Psoas muscle (tissue), 8 donors: ENCODE measurements at regions of chr12 and their contacts with region 1.

Region 1: GRCh38 chr12:26028953-26029735 is 70.7 kb downstream of the RASSF8 start:
- DNase-seq: no peak
- ATAC-seq: peak; percentile 65 to 88 (median 69)
- H3K4me3 ChIP-seq: no peak overlapping the region
- H3K27ac ChIP-seq: no peak overlapping the region
- H3K4me1 ChIP-seq: peaks cover 22% of the 10 kb centered on the region
- H3K27me3 ChIP-seq: no peaks in the 10 kb centered on the region
- CTCF ChIP-seq: peak; percentile 84

Region 2: DNA sequence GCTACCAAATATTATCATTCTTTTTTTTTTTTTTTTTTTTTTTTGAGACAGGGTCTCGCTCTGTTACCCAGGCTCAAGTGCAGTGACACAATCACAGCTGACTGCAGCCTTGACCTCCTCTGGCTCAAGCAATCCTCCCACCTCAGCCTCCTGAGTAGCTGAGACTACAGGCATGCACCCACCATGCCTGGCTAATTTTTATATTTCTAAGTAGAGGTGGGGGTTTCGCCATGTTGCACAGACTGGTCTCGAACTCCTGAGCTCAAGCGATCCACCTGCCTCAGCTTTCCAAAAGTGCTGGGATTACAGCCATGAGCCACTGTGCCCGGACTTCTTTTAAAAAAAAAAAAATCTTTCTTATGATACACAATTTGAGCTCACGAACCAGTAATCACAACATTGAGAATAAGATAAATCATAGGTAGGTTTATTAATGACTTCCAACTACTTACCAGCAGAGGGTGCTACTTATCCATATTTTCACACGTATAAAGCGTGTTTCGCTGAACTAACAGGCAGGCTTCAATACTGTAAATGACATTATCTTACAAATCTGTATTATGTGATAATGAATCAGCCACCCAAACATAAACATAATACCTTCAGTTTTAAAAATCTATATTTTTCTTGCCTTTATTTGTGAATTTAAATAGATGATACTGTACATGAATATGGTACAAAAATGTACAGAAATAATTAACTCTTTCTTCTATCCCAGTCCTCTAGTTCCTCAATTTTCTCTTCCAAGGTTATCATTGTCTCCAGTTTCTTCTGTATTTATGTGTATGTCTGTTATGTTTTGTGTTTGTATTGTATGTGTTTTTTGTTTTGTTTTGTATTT is 1037.7 kb before region 1 on chr12:
- intact Hi-C with region 1: loop called in 1 of 2 experiments (anchors 5 kb)
- DNase-seq: no peak
- ATAC-seq: peak; percentile 69 to 86 (median 74)
- H3K4me3 ChIP-seq: no peak overlapping the region
- H3K27ac ChIP-seq: no peak overlapping the region
- H3K4me1 ChIP-seq: no peaks in the 10 kb centered on the region
- H3K27me3 ChIP-seq: no peaks in the 10 kb centered on the region
- CTCF ChIP-seq: peak; percentile 72

Region 3: DNA sequence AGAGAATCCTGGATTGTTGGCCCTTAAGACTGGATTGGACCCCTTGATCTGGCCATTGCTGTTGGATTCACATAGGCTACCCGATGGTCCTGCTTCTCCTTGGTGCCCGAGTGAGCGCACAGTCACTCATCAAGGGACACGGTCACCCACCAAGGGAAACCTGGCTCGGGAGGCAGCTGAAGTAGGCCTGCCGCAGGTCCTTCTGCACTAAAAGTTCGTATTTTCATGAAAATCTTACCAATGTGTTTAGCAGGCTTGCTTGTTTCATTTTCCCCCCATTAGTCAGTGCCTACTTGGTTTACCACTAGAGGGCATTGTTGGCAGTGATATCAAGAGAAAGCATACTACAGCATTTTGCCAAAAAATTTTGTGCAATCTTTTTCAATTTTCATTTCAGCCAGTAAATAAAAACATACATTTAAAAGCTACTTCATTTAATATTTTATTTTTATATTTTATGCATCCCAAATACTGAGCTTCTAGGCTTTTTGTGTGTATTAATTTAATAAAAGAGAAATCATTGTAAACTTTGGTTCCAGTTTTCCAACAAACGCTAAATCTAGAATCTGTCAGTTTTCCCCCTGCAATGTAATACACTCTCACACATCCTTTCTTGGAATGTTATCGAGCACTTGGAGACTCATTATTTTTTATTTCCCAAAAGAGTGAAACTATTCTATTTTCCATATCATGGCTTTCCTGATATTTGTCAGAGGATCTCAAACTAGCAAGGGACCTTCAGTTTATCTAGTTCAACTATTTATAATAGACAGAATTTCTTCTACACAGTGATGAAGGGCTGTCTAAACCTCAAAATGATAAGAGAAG is 592.7 kb before region 1 on chr12:
- intact Hi-C with region 1: loop called (anchors 2 kb)
- DNase-seq: peak in 1 of 2 donors; percentile 45
- ATAC-seq: peak in 3 of 4 donors; percentile 49 to 90 (median 74)
- H3K4me3 ChIP-seq: peak overlapping the region; percentile 62
- H3K27ac ChIP-seq: no peak overlapping the region
- H3K4me1 ChIP-seq: no peaks in the 10 kb centered on the region
- H3K27me3 ChIP-seq: no peaks in the 10 kb centered on the region
- CTCF ChIP-seq: peak; percentile 79

Region 4: DNA sequence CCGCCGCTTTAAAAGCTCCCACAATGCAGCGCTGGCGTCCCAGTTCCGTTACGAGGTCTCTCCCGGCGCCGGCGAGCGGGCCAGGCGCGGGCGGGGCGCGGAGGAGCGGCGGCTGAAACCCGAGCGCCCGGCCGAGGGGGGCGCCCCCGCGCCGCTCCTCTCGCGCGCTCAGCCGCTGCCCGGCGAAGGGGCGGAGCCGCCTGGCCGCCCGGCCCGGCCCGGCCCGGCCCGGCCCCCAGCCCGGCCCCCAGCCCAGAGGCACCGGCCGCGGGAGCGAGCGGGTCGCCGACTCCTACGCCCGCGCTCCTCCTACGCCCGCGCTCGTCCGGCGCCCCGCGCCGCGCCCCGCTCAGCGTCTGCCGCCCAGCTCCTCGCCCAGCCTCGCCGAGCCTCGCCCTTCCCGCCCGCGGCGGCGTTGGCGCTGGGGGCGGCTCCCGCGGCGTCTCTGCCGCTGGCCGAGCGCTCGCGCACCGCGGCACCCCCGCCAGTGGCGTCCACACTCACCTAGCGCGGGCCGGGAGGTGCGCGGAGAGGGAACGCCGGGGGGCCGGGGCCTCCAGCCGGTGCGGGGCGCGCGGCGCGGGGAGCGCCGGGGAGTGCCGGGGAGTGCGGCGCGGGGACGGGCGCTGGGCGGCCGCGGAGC is 70.6 kb before region 1 on chr12 and contains the start of gene RASSF8:
- intact Hi-C with region 1: loop called in 1 of 2 experiments (anchors 5 kb)
- DNase-seq: peak; percentile 84 to 86
- ATAC-seq: peak; percentile 87 to 92 (median 90)
- H3K4me3 ChIP-seq: peak within 1 kb of the TSS; percentile 74
- H3K27ac ChIP-seq: peak within 1 kb of the TSS; percentile 90
- H3K4me1 ChIP-seq: peaks cover 32% of the 10 kb centered on the region
- H3K27me3 ChIP-seq: no peaks in the 10 kb centered on the region
- CTCF ChIP-seq: no peak
- total RNA-seq, gene RASSF8: 41.9 to 80.3 (median 54.2) TPM

Region 5: DNA sequence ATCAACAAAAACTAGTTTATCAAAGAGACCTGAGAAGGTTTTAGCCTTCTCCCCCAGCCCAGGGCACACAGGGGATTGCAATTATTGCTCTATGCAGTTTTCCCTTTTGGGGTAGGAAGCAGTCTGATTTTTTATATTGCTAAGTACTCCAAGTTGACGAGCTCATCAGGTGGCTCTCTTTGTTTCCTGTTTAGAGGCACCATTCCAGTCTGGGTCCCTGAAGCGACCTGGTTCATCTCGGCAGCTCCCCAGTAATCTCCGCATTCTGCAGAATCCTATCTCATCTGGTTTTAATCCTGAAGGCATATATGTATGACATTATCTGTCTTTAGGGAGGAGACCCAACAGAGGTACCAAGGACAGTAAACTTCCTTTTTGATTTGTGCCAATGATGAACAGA is 39.4 kb after region 1 on chr12:
- intact Hi-C with region 1: no loop called
- DNase-seq: no peak
- ATAC-seq: no peak
- H3K4me3 ChIP-seq: no peak overlapping the region
- H3K27ac ChIP-seq: no peak overlapping the region
- H3K4me1 ChIP-seq: no peaks in the 10 kb centered on the region
- H3K27me3 ChIP-seq: no peaks in the 10 kb centered on the region
- CTCF ChIP-seq: no peak

Region 6: GRCh38 chr12:26566675-26567074 is 537.5 kb after region 1 on chr12:
- intact Hi-C with region 1: no loop called
- DNase-seq: no peak
- ATAC-seq: no peak
- H3K4me3 ChIP-seq: no peak overlapping the region
- H3K27ac ChIP-seq: no peak overlapping the region
- H3K4me1 ChIP-seq: no peaks in the 10 kb centered on the region
- H3K27me3 ChIP-seq: no peaks in the 10 kb centered on the region
- CTCF ChIP-seq: no peak

Region 7: GRCh38 chr12:26810330-26810729 is 781.2 kb after region 1 on chr12:
- intact Hi-C with region 1: no loop called
- DNase-seq: peak; percentile 38 to 58
- ATAC-seq: peak; percentile 67 to 92 (median 82)
- H3K4me3 ChIP-seq: no peak overlapping the region
- H3K27ac ChIP-seq: no peak overlapping the region
- H3K4me1 ChIP-seq: peaks cover 20% of the 10 kb centered on the region
- H3K27me3 ChIP-seq: no peaks in the 10 kb centered on the region
- CTCF ChIP-seq: no peak